Transverse colon (tissue), 4 donors: ENCODE measurements at regions of chr2 and their contacts with region 1.

Region 1: DNA sequence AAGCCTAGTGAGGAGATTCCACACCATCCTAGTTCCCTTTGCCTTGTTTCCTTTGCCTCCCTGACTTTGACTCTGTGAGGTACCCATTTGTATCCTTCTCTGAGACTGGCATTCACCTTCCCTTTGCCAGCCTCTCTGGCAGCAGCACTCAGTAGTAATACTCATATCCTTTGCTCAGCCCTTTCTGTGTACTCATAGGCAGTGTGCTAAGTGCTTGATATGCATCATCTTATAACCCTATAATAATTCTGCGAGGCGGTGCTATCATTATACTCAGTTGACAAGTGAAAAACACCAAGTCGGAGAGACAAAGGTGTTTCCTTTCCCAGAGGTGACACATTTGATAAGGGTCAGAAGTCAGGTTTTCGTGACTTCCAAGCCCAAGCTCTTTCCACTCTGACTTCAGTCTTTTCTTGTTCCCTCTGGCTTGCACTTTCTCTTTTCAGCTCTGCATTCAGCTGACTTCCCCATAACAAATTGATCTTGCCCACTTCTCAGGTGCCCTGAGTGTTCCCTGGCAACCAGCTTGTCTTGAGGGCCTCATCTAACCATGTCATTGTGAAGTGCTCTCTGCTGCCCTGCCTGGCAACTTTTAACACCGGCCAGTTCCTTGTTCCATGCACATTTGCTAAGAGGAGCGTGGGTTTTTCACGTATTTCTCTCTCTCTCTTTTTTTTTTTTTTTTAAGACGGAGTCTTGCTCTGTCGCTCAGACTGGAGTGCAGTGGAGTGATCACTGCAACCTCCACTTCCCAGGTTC is 94.5 kb upstream of the UPP2 start:
- DNase-seq: peak; percentile 16
- H3K4me3 ChIP-seq: no peak overlapping the region
- H3K27ac ChIP-seq: no peak overlapping the region
- H3K4me1 ChIP-seq: peaks cover 0 to 4% (median 0%) of the 10 kb centered on the region in 4 donors
- H3K27me3 ChIP-seq: no peaks in the 10 kb centered on the region
- CTCF ChIP-seq: no peak
- EP300 ChIP-seq: no peak
- POLR2A ChIP-seq: no peak

Region 2: DNA sequence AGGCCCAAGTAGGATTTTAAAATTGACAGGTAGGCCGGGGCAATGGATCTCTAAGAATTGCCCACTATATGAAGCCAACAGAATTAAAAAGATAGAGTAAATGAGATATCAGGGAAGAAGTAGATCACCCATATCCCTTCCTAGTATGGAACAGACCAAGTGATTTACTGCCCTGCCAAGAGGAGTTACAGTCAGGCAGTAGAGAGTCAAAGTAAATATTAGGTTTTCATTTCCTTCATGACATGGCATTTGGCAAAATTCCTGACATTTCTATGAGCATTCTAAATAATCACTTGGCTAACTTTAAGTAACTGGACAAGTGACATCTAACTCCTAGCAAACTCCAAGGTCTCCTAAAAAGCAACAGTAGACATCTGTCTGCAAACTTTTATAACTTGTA is 716.1 kb before region 1 on chr2:
- in situ Hi-C with region 1: loop called in 1 of 4 experiments (anchors 10 kb)
- intact Hi-C with region 1: no loop called
- DNase-seq: no peak
- H3K4me3 ChIP-seq: no peak overlapping the region
- H3K27ac ChIP-seq: no peak overlapping the region
- H3K4me1 ChIP-seq: peaks cover 0 to 7% (median 3%) of the 10 kb centered on the region in 4 donors
- H3K27me3 ChIP-seq: no peaks in the 10 kb centered on the region
- CTCF ChIP-seq: no peak
- EP300 ChIP-seq: no peak
- POLR2A ChIP-seq: no peak

Region 3: DNA sequence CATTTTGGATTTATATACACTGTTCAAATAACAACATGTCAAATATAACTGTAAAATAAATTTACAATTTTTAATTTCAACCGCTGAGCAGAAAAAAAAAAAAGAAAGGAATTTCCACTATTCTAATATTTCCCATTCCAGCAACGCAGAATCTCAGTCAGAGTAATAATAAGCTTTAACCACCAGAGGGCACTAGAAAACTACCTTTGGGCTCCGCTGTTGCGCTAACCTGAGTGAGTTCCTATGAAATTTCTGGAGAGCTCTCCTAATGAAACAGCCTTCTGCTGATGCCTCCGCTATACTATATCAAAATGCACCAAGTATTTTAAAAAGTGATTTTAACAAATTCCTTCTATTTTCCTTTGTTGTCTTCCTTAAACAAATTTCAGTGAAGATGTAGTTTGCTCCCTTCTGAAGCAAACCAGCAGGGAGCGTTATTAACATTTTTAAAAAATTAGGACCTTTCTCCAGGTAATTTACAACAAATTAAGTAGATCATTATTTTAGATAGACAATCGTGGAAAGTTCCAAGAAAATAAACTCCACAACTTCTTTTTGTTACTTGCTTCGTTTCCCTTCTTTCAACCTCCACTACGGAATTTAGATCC is 704.5 kb before region 1 on chr2:
- in situ Hi-C with region 1: loop called in 3 of 4 experiments (anchors 10 to 25 kb)
- intact Hi-C with region 1: no loop called
- DNase-seq: no peak
- H3K4me3 ChIP-seq: no peak overlapping the region
- H3K27ac ChIP-seq: no peak overlapping the region
- H3K4me1 ChIP-seq: peaks cover 0 to 5% (median 0%) of the 10 kb centered on the region in 4 donors
- H3K27me3 ChIP-seq: peaks cover 16% of the 10 kb centered on the region
- CTCF ChIP-seq: peak; percentile 67 to 79 (median 74)
- EP300 ChIP-seq: no peak
- POLR2A ChIP-seq: no peak

Region 4: DNA sequence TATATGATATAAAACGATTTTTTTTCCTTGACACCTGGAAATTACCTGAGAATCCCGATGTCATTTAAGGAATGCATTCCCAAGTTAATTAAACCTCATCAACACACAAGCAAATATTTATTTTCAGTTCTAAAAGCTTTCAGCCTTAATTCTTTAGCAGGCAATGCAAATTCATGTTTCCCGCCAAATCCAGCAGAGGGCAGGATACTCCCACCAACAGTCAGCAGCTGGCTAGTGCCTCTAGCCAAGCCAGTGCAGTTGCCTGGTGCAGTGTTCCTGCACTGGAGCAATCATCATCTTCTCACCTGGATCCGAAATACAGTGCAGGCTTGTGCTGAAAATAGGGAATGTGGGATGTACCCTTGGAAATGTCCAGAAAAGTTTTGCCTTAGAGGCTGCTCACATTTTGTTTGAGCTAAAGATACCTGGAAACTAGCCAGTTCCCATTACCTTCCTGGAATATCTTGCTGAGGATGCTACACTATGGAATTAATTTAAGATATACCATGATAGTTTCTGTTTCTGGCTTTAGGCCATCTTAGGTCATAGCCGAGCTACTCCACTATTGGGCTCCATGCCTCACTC is 514.9 kb before region 1 on chr2:
- in situ Hi-C with region 1: loop called (anchors 5 to 25 kb)
- intact Hi-C with region 1: loop called (anchors 10 kb)
- DNase-seq: peak; percentile 77
- H3K4me3 ChIP-seq: no peak overlapping the region
- H3K27ac ChIP-seq: no peak overlapping the region
- H3K4me1 ChIP-seq: peaks cover 0 to 5% (median 3%) of the 10 kb centered on the region in 4 donors
- H3K27me3 ChIP-seq: no peaks in the 10 kb centered on the region
- CTCF ChIP-seq: peak; percentile 52 to 76 (median 67)
- EP300 ChIP-seq: no peak
- POLR2A ChIP-seq: no peak

Region 5: DNA sequence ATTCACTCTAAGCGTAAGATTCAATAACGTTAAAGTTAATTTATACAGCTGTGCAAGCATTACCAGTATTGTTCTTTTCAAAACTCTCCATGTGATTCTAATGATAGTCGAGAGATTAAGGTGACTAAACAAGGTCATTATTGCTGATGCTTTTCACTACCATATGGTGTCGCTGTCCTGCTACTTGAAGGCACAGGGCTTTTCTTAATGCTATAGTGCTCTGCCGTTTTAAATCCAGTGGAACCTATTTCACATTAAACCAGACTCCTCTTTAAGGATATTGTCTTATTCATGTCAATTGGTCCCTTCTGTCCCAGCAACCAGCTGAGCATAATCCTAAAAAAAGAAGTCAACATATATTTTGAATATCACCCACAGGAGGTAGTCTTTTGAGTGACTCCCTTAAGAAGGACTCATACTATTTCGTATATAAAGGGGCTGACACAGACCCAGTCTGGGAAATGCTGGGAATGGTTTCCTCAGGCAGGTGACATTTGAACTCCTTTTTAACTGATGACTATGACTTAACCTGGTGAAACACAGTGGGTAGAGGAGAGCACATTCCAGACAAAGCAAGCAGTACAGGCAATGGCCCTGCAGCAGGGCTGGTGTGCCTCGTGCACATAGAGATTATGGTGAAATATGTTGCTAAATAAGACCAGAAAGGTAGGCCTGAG is 509.4 kb before region 1 on chr2:
- in situ Hi-C with region 1: loop called (anchors 5 to 25 kb)
- intact Hi-C with region 1: loop called (anchors 10 kb)
- DNase-seq: no peak
- H3K4me3 ChIP-seq: no peak overlapping the region
- H3K27ac ChIP-seq: no peak overlapping the region
- H3K4me1 ChIP-seq: no peaks in the 10 kb centered on the region
- H3K27me3 ChIP-seq: no peaks in the 10 kb centered on the region
- CTCF ChIP-seq: peak; percentile 58 to 78 (median 62)
- EP300 ChIP-seq: no peak
- POLR2A ChIP-seq: no peak

Region 6: DNA sequence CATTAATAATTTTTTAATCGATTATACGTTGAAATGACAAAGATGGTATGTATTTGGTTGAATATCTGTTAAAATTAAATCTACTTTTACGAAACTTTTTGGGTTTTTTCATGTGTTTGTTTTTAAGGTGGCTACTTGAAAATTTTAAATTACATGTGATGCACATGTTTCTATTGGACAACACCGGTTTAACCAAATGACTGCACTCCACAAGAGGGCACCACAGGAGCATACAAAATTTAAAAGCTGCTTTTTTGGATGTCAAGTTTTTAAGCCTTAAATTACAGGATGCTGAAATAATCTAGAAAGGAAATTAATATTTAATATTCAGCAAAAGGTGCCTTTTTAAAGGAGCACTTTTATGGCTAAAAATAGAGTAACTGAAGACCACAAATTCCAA is 229.7 kb before region 1 on chr2:
- in situ Hi-C with region 1: loop called (anchors 5 to 25 kb)
- intact Hi-C with region 1: loop called (anchors 5 kb)
- DNase-seq: peak; percentile 41
- H3K4me3 ChIP-seq: no peak overlapping the region
- H3K27ac ChIP-seq: no peak overlapping the region
- H3K4me1 ChIP-seq: peaks cover 0 to 2% (median 0%) of the 10 kb centered on the region in 4 donors
- H3K27me3 ChIP-seq: no peaks in the 10 kb centered on the region
- CTCF ChIP-seq: peak; percentile 56 to 68 (median 62)
- EP300 ChIP-seq: no peak
- POLR2A ChIP-seq: no peak

Region 7: DNA sequence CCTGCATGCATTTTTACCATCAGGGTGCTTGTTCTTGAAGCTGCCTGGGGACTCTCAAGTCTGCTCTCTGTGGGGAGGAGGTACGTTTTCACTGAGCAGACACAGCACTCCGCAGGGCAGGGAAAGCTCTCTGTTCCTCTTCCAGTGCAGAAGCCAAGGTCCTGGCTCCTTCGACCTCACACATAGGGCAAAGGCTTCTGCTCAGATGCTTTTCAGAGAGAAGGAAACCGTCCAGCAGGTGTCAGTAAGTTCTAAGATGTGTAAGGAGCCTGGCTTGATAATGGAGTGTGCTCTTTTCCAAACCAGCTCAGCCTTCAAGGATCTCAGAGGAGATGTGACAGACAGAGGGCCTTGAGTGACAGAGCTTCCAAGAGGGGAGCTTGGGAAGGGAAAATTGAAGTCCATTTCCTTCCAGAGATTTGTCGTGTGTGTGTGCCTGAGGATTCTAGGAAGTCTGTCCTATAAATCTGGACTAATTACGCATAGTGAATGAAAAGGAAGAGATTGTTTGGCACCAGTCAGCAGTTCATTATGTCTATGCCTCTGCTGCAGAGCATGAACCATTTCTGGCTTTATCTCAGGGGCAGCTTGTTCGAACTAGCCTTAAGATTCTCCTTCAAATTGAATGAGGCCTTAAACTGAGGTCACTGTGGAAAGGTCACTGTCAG is 27.2 kb after region 1 on chr2:
- in situ Hi-C with region 1: no loop called
- intact Hi-C with region 1: no loop called
- DNase-seq: peak; percentile 54
- H3K4me3 ChIP-seq: no peak overlapping the region
- H3K27ac ChIP-seq: no peak overlapping the region
- H3K4me1 ChIP-seq: no peaks in the 10 kb centered on the region
- H3K27me3 ChIP-seq: no peaks in the 10 kb centered on the region
- CTCF ChIP-seq: peak; percentile 32 to 62 (median 51)
- EP300 ChIP-seq: no peak
- POLR2A ChIP-seq: no peak